ENCODE measurements at regions of chr17 and their contacts with region 1.

Region 1: DNA sequence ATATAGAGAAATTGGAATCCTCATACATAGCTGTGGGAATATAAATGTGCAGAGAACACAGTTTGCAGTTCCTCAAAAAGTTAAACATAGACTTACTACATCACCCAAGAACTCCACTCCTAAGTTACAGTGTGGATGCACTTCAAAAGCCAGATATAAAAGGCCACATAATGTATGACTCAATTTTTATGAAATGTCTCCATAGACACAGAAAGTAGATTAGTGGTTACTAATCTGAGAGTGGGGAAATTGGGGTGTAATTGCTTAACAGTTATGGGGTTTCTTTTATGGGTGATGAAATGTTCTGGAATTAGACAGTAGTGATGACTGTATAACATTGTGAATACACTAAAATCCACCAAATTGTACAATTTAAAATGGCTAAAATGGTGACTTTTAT is 60.9 kb downstream of the CACNG1 start:
- DNase-seq: peak; percentile 70
- H3K4me3 ChIP-seq: no peak overlapping the region
- H3K27ac ChIP-seq: no peak overlapping the region
- H3K4me1 ChIP-seq: peaks cover 3% of the 10 kb centered on the region
- H3K27me3 ChIP-seq: no peaks in the 10 kb centered on the region
- CTCF ChIP-seq: no peak

Region 2: GRCh38 chr17:67157732-67158639 is 52.8 kb after region 1 on chr17:
- CTCF ChIA-PET with region 1: no interaction called
- dilution Hi-C with region 1: no loop called
- in situ Hi-C with region 1: no loop called
- intact Hi-C with region 1: loop called (anchors 5 kb)
- DNase-seq: no peak
- H3K4me3 ChIP-seq: no peak overlapping the region
- H3K27ac ChIP-seq: no peak overlapping the region
- H3K4me1 ChIP-seq: no peaks in the 10 kb centered on the region
- H3K27me3 ChIP-seq: no peaks in the 10 kb centered on the region
- CTCF ChIP-seq: peak; percentile 24 to 46

Region 3: GRCh38 chr17:67168496-67168895 is 63.3 kb after region 1 on chr17:
- CTCF ChIA-PET with region 1: no interaction called
- dilution Hi-C with region 1: no loop called
- in situ Hi-C with region 1: no loop called
- intact Hi-C with region 1: loop called (anchors 2 kb)
- DNase-seq: no peak
- H3K4me3 ChIP-seq: no peak overlapping the region
- H3K27ac ChIP-seq: no peak overlapping the region
- H3K4me1 ChIP-seq: no peaks in the 10 kb centered on the region
- H3K27me3 ChIP-seq: no peaks in the 10 kb centered on the region
- CTCF ChIP-seq: no peak

Region 4: GRCh38 chr17:67245073-67245755 is 140.0 kb after region 1 on chr17 and contains the start of gene HELZ:
- CTCF ChIA-PET with region 1: no interaction called
- dilution Hi-C with region 1: no loop called
- in situ Hi-C with region 1: no loop called
- intact Hi-C with region 1: no loop called
- DNase-seq: peak; percentile 78
- H3K4me3 ChIP-seq: peak within 1 kb of the TSS; percentile 89 to 98 (median 91)
- H3K27ac ChIP-seq: peak within 1 kb of the TSS; percentile 89
- H3K4me1 ChIP-seq: peaks cover 19% of the 10 kb centered on the region
- H3K27me3 ChIP-seq: no peaks in the 10 kb centered on the region
- CTCF ChIP-seq: no peak
- total RNA-seq, gene HELZ: 51.3 to 62.5 TPM

Measured in mammary epithelial cell (primary cell).